HCT116 (cell line): ENCODE measurements at regions of chr19 and their contacts with region 1.

Region 1: GRCh38 chr19:18304458-18305310 is 18.2 kb downstream of the LSM4 start:
- DNase-seq: no peak
- ATAC-seq: peak; percentile 76
- H3K4me3 ChIP-seq: peak overlapping the region; percentile 46 to 55
- H3K27ac ChIP-seq: peak overlapping the region; percentile 97
- H3K4me1 ChIP-seq: peaks cover 49 to 63% of the 10 kb centered on the region in 2 experiments
- H3K27me3 ChIP-seq: no peaks in the 10 kb centered on the region
- CTCF ChIP-seq: no peak
- POLR2A ChIP-seq: peak; percentile 55
- RAD21 ChIP-seq: no peak

Region 2: DNA sequence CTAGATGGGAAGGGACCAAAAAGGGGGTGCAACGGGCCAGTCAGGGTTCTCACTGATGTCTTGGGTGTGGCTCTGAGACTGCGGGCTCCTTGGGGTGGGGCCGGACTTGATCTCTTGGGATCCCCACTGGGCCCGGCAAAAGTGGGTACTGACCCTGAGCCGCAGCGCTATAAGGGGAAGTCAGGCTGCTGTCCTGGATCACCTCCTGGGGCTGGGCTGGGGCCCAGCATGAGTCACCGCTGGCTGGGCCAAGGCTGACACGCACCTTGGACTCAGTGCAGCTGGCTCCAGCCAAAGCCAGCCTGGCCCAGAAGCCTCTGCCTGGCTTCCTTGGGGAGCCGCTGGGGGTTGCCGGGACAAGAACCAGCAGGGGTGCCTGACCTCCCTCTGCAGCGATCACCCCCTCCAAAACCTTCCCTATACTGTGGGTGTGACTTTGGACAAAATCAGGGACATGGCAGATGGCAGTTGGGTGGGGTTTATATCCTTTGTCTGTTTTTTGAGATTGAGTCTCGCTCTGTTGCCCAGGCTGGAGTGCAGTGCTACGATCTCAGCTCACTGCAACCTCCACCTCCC is 29.8 kb before region 1 on chr19:
- CTCF ChIA-PET with region 1: interaction called, 21 read pairs
- POLR2A ChIA-PET with region 1: interaction called, 62 read pairs
- RAD21 ChIA-PET with region 1: interaction called, 3 read pairs
- intact Hi-C with region 1: loop called (anchors 2 kb)
- DNase-seq: no peak
- ATAC-seq: peak; percentile 82
- H3K4me3 ChIP-seq: peak overlapping the region; percentile 1 to 47; a peak in 3 of 4 replicates
- H3K27ac ChIP-seq: peak overlapping the region; percentile 92
- H3K4me1 ChIP-seq: peaks cover 57 to 72% of the 10 kb centered on the region in 2 experiments
- H3K27me3 ChIP-seq: no peaks in the 10 kb centered on the region
- CTCF ChIP-seq: no peak
- POLR2A ChIP-seq: no peak
- RAD21 ChIP-seq: no peak

Region 3: GRCh38 chr19:18291590-18292461 is 12.9 kb before region 1 on chr19:
- CTCF ChIA-PET with region 1: interaction called, 10 read pairs
- POLR2A ChIA-PET with region 1: interaction called, 23 read pairs
- RAD21 ChIA-PET with region 1: interaction called in 1 of 2 experiments, 3 read pairs
- intact Hi-C with region 1: no loop called
- DNase-seq: no peak
- ATAC-seq: peak; percentile 65
- H3K4me3 ChIP-seq: peak overlapping the region; percentile 49 to 74
- H3K27ac ChIP-seq: peak overlapping the region; percentile 94
- H3K4me1 ChIP-seq: peaks cover 28 to 55% of the 10 kb centered on the region in 2 experiments
- H3K27me3 ChIP-seq: no peaks in the 10 kb centered on the region
- CTCF ChIP-seq: no peak
- POLR2A ChIP-seq: peak; percentile 2
- RAD21 ChIP-seq: no peak

Region 4: GRCh38 chr19:18322759-18323460 is 18.2 kb after region 1 on chr19 and contains the start of gene LSM4:
- CTCF ChIA-PET with region 1: interaction called, 14 read pairs
- POLR2A ChIA-PET with region 1: interaction called, 17 read pairs
- RAD21 ChIA-PET with region 1: interaction called in 1 of 2 experiments, 5 read pairs
- intact Hi-C with region 1: no loop called
- DNase-seq: peak; percentile 98
- ATAC-seq: peak; percentile 93
- H3K4me3 ChIP-seq: peak within 1 kb of the TSS; percentile 78 to 97
- H3K27ac ChIP-seq: peak within 1 kb of the TSS; percentile 93
- H3K4me1 ChIP-seq: peaks cover 49 to 53% of the 10 kb centered on the region in 2 experiments
- H3K27me3 ChIP-seq: no peaks in the 10 kb centered on the region
- CTCF ChIP-seq: peak; percentile 29 to 51 (median 42)
- POLR2A ChIP-seq: peak; percentile 68
- RAD21 ChIP-seq: peak; percentile 69
- total RNA-seq, gene LSM4: 400 TPM

Region 5: DNA sequence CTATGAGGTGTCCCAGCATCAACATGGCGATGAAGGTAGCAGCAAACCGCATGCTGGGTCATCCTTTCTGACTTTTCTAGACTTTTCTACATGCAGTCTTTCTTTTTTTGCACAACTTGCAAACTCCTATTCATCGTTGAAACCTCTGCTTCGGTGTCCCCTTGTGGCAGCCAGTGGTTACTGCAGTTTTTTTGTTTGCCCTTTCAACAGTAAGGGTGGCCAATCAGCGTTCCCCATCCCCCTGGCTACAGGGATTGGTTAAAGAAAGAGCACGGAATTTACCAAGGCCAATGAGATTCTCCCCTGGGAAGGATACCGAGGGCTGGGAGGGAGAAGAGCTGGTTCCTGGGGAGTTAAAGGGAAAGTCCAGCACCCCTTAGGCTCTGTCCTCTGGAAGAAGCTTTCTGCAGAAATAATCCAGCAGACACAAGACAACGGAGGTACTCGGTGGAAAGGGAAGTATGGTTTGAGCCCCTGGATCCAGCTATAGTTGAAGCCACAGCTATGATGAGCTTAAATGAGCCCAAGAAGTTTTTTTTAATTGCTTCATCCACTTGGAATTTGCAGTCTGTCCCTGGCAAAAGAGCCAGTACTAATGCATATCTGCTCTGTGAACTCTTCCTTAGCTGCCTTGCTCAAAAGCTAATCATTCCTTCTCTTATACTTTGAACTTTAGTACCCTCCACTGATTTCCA is 23.8 kb after region 1 on chr19:
- CTCF ChIA-PET with region 1: interaction called, 12 read pairs
- POLR2A ChIA-PET with region 1: interaction called, 7 read pairs
- RAD21 ChIA-PET with region 1: no interaction called
- intact Hi-C with region 1: no loop called
- DNase-seq: peak; percentile 94
- ATAC-seq: peak; percentile 99
- H3K4me3 ChIP-seq: peak overlapping the region; percentile 45 to 46
- H3K27ac ChIP-seq: peak overlapping the region; percentile 45
- H3K4me1 ChIP-seq: peaks cover 21 to 35% of the 10 kb centered on the region in 2 experiments
- H3K27me3 ChIP-seq: no peaks in the 10 kb centered on the region
- CTCF ChIP-seq: peak; percentile 90 to 97 (median 93); a peak in 5 of 6 replicates
- POLR2A ChIP-seq: peak; percentile 72
- RAD21 ChIP-seq: peak; percentile 91